GM18951 (cell line): ENCODE measurements at regions of chr1 and their contacts with region 1.

Region 1: DNA sequence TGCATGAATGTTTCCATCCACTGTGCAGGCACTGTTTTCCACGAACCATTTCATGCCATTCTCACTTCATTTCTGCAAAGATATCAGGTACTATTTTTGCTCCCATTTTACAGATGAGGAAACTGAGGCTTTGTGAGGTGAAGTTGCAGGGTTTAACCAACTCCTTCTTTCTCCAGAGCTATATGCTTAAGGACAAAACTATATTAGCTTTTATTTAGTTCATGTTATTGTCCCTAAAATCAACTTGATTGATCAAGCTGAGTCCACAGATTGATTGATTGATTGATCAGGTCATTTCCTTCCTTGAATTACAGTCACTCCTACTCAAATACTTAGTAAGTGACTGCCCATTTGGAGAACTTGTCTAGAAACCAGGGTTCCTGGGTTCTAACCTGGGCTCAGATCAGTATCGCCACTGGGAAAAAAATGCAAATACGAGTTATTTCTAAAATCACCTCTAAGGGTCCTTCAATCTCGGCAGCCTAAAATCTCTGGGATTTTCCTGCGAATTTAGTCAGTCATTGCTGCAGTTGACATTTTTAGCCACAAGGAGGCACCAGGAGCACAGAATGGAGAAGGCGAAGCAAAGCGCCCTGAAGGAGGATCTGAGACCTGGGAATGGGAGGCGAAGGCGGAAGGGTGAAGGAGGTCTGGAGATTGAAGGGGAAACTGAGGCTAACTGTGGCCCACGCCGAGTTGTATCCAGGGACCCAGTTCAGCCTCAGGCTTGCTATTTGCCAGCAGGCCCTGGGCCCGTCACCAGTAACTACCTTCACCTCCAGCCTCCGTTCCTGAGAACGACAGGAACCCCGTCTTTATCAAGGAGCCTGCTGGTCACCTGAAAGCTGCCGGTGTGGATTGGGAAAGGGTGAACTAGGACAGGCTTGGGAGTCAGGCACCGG is 14.3 kb upstream of the MUL1 start:
- POLR2A ChIP-seq: no peak

Region 2: DNA sequence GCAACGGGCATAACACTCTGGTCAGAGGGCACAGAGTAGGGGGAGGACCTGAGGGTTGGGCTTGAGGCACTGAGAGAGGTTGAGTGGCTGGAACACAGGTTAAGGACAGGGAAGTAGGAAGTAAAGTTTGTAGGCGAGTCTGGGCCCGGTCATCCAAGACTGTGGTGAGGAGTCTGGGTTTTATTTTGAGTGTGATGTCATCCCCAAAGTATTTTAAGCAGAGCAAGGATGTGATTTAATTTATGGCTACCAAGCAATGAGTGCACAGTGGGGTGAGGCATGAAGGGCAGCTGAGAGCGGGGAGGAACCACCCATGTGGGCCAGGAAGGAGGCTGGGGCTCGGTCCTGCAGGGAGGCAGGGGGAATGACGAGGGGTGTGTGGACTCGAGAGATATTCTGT is 242.7 kb before region 1 on chr1:
- in situ Hi-C with region 1: no loop called
- POLR2A ChIP-seq: no peak

Region 3: DNA sequence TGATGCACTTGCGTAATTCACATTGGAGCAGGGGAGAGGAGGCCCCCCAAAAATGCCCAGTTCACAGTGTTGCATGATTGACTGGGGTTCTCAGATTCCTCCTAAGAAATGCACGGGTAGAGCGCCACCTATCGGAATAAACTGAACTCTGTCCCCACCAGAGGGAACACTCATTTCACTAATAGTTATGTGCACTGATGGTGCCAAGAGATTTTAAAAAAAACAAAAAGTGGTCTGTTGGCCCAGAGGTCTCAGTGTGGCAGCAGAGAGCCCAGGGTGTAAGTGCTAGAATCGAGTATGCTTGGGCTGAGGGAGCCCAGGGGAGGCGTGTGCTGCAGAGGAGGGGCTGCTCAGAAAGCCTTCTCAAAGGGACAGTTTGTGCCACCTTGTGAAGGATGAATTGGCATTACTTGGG is 118.0 kb after region 1 on chr1:
- in situ Hi-C with region 1: loop called (anchors 10 kb)
- POLR2A ChIP-seq: no peak